CD8-positive, alpha-beta T cell (primary cell): ENCODE measurements at regions of chr3 and their contacts with region 1.

Region 1: DNA sequence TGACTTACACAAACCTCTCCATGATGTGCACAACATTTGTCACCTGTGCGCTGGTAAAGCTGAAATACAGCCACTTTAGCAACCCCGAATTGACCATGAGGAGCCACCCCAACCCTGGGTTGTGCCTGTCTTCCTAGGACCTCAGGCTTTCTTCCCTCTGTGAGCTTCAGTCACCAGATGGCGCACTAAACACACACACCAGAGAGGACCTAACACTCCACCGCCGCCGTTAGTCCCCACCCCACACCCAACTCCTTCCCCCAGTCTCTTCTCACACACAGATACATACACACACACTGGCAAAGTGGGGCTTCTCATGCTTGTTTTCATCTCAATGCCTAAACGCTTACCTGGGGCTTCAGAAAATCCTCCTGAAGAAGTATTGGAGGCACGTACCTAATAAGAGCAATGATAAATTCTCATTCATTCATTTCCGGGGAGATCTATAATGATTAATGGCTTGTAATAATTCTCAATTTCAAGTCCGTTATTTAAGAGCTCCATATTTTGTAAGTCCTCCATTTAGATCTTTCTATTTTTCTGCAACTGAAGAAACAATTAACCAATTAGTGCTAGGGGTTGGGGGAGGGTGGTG is 2.1 kb upstream of the CCDC80 start:
- DNase-seq: peak; percentile 58 to 89 (median 80)
- ATAC-seq: peak; percentile 97
- H3K4me3 ChIP-seq: no peak overlapping the region
- H3K4me3 Mint-ChIP-seq: peak overlapping the region; percentile 63
- H3K27ac ChIP-seq: no peak overlapping the region
- H3K27ac Mint-ChIP-seq: no peak overlapping the region
- H3K4me1 ChIP-seq: peaks cover 3% of the 10 kb centered on the region
- H3K4me1 Mint-ChIP-seq: peaks cover 16% of the 10 kb centered on the region
- H3K27me3 ChIP-seq: no peaks in the 10 kb centered on the region
- H3K27me3 Mint-ChIP-seq: peaks cover 6% of the 10 kb centered on the region
- CTCF ChIP-seq: peak; percentile 68

Region 2: DNA sequence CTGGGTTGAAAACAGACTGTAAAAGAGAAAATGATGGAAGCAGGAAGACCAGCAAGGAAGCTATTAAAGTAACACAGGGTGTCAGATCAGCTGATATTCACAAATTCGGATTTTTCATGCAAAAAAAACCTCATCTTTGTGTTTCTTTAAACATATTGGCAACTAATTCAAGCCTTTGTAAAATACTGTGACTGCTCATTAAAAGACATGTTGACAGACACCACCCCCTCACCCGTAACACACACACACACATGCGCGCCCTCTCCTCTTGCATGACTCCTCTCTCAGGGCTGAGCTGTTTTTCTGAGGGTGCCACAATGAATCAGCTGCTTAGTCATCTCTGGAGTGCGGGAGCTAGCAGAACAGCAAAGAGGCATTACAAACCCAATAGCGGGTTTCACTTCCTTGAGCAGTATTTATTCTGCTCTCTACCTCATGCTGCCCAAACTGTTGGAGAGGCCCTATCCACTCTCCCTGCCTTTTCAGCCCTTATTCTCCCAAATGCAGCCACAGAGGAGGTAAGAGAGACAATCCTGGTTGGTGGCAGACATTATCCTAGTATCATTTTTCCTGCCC is 33.7 kb after region 1 on chr3:
- CTCF ChIA-PET with region 1: no interaction called
- POLR2A ChIA-PET with region 1: no interaction called
- intact Hi-C with region 1: no loop called
- DNase-seq: peak; percentile 21 to 80 (median 69)
- ATAC-seq: peak; percentile 86
- H3K4me3 ChIP-seq: no peak overlapping the region
- H3K4me3 Mint-ChIP-seq: peak overlapping the region; percentile 27
- H3K27ac ChIP-seq: no peak overlapping the region
- H3K27ac Mint-ChIP-seq: peak overlapping the region; percentile 62
- H3K4me1 ChIP-seq: peaks cover 18% of the 10 kb centered on the region
- H3K4me1 Mint-ChIP-seq: peaks cover 41% of the 10 kb centered on the region
- H3K27me3 ChIP-seq: no peaks in the 10 kb centered on the region
- H3K27me3 Mint-ChIP-seq: peaks cover 3% of the 10 kb centered on the region
- CTCF ChIP-seq: no peak

Region 3: GRCh38 chr3:112699436-112699978 is 56.5 kb after region 1 on chr3:
- CTCF ChIA-PET with region 1: interaction called, 3 read pairs
- POLR2A ChIA-PET with region 1: no interaction called
- intact Hi-C with region 1: loop called in 1 of 2 experiments (anchors 5 kb)
- DNase-seq: peak in 1 of 9 experiments; percentile 17
- ATAC-seq: no peak
- H3K4me3 ChIP-seq: no peak overlapping the region
- H3K4me3 Mint-ChIP-seq: no peak overlapping the region
- H3K27ac ChIP-seq: no peak overlapping the region
- H3K27ac Mint-ChIP-seq: no peak overlapping the region
- H3K4me1 ChIP-seq: no peaks in the 10 kb centered on the region
- H3K4me1 Mint-ChIP-seq: no peaks in the 10 kb centered on the region
- H3K27me3 ChIP-seq: no peaks in the 10 kb centered on the region
- H3K27me3 Mint-ChIP-seq: peaks cover 2% of the 10 kb centered on the region
- CTCF ChIP-seq: no peak

Region 4: GRCh38 chr3:112814266-112814665 is 171.3 kb after region 1 on chr3:
- CTCF ChIA-PET with region 1: interaction called, 13 read pairs
- POLR2A ChIA-PET with region 1: no interaction called
- intact Hi-C with region 1: loop called in 1 of 2 experiments (anchors 1 kb)
- DNase-seq: peak in 2 of 9 experiments; percentile 20 to 34
- ATAC-seq: no peak
- H3K4me3 ChIP-seq: no peak overlapping the region
- H3K4me3 Mint-ChIP-seq: no peak overlapping the region
- H3K27ac ChIP-seq: no peak overlapping the region
- H3K27ac Mint-ChIP-seq: no peak overlapping the region
- H3K4me1 ChIP-seq: no peaks in the 10 kb centered on the region
- H3K4me1 Mint-ChIP-seq: peaks cover 12% of the 10 kb centered on the region
- H3K27me3 ChIP-seq: no peaks in the 10 kb centered on the region
- H3K27me3 Mint-ChIP-seq: no peaks in the 10 kb centered on the region
- CTCF ChIP-seq: no peak

Region 5: GRCh38 chr3:112894258-112894657 is 251.2 kb after region 1 on chr3:
- CTCF ChIA-PET with region 1: no interaction called
- POLR2A ChIA-PET with region 1: no interaction called
- intact Hi-C with region 1: no loop called
- DNase-seq: no peak
- ATAC-seq: no peak
- H3K4me3 ChIP-seq: no peak overlapping the region
- H3K4me3 Mint-ChIP-seq: no peak overlapping the region
- H3K27ac ChIP-seq: no peak overlapping the region
- H3K27ac Mint-ChIP-seq: no peak overlapping the region
- H3K4me1 ChIP-seq: no peaks in the 10 kb centered on the region
- H3K4me1 Mint-ChIP-seq: no peaks in the 10 kb centered on the region
- H3K27me3 ChIP-seq: no peaks in the 10 kb centered on the region
- H3K27me3 Mint-ChIP-seq: no peaks in the 10 kb centered on the region
- CTCF ChIP-seq: no peak

Region 6: GRCh38 chr3:112979240-112979832 is 336.3 kb after region 1 on chr3:
- CTCF ChIA-PET with region 1: interaction called, 54 read pairs
- POLR2A ChIA-PET with region 1: no interaction called
- intact Hi-C with region 1: loop called (anchors 1 kb)
- DNase-seq: peak in 3 of 9 experiments; percentile 37 to 72 (median 66)
- ATAC-seq: peak; percentile 37
- H3K4me3 ChIP-seq: no peak overlapping the region
- H3K4me3 Mint-ChIP-seq: no peak overlapping the region
- H3K27ac ChIP-seq: no peak overlapping the region
- H3K27ac Mint-ChIP-seq: no peak overlapping the region
- H3K4me1 ChIP-seq: peaks cover 38% of the 10 kb centered on the region
- H3K4me1 Mint-ChIP-seq: peaks cover 56% of the 10 kb centered on the region
- H3K27me3 ChIP-seq: no peaks in the 10 kb centered on the region
- H3K27me3 Mint-ChIP-seq: no peaks in the 10 kb centered on the region
- CTCF ChIP-seq: peak; percentile 93

Region 7: GRCh38 chr3:113035387-113035982 is 392.5 kb after region 1 on chr3:
- CTCF ChIA-PET with region 1: interaction called, 6 read pairs
- POLR2A ChIA-PET with region 1: no interaction called
- intact Hi-C with region 1: loop called (anchors 2 to 5 kb)
- DNase-seq: peak in 5 of 9 experiments; percentile 13 to 72 (median 39)
- ATAC-seq: peak; percentile 86
- H3K4me3 ChIP-seq: no peak overlapping the region
- H3K4me3 Mint-ChIP-seq: no peak overlapping the region
- H3K27ac ChIP-seq: no peak overlapping the region
- H3K27ac Mint-ChIP-seq: no peak overlapping the region
- H3K4me1 ChIP-seq: no peaks in the 10 kb centered on the region
- H3K4me1 Mint-ChIP-seq: no peaks in the 10 kb centered on the region
- H3K27me3 ChIP-seq: no peaks in the 10 kb centered on the region
- H3K27me3 Mint-ChIP-seq: no peaks in the 10 kb centered on the region
- CTCF ChIP-seq: peak; percentile 81

Region 8: DNA sequence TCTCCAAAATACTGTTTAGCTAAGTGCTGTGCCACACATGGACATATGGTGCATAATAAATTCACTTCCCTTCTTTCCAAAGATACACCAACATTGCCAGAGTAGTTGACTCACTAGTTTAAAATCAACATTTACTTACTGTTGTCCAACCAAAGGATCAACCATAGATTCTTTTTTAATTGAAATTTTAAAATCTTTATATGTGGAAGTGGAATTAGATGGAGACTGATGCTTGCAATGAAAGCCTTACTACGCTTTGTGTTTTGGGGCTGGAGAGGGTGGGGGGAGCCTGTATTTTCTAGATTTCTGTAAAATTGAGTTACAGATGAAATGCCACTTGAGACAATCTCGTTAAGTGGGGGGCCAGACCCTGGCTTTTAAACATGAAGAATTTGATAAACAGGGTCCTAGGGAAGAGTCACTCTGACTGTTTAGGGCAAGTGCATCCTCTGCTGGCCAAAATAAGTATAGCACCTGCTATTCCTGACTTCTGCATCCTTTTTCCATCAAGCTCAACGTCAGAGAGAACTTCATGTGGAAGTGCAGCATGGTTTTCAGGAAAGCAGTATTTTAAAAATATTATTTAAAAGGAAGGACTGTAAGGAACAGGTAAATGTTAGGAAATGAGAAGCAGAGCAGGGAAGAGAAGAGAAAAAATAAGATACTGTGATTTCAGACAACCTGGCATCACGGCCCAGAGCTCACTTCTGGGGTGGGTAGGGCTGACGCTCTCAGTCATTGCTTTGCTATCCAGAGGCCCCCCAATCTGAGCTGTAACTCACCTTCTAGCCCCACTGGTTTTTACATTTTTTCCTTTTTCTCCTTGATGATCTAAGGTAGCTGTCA is 645.0 kb after region 1 on chr3:
- CTCF ChIA-PET with region 1: interaction called, 72 read pairs
- POLR2A ChIA-PET with region 1: no interaction called
- intact Hi-C with region 1: loop called in 1 of 2 experiments (anchors 1 kb)
- DNase-seq: peak in 7 of 9 experiments; percentile 14 to 68 (median 56)
- ATAC-seq: peak; percentile 59
- H3K4me3 ChIP-seq: no peak overlapping the region
- H3K4me3 Mint-ChIP-seq: no peak overlapping the region
- H3K27ac ChIP-seq: no peak overlapping the region
- H3K27ac Mint-ChIP-seq: no peak overlapping the region
- H3K4me1 ChIP-seq: no peaks in the 10 kb centered on the region
- H3K4me1 Mint-ChIP-seq: no peaks in the 10 kb centered on the region
- H3K27me3 ChIP-seq: no peaks in the 10 kb centered on the region
- H3K27me3 Mint-ChIP-seq: no peaks in the 10 kb centered on the region
- CTCF ChIP-seq: peak; percentile 99

Region 9: DNA sequence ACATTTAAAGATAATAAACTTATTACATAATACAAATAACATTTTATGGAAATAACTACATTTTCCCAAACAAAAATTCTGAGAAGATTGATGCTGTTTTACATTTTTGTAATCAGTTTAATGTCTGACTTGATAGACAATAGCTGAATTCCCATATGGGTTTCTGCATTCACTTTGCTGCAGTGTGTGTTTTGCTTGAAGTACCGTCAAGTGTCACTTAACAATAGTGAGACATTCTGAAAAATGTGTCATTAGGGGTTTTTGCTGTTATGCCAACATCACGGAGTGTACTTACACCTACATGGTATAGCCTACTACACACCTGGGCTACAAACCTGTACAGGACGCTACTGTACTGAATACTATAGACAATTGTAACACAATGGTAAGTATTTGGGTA is 995.9 kb after region 1 on chr3:
- CTCF ChIA-PET with region 1: no interaction called
- POLR2A ChIA-PET with region 1: no interaction called
- intact Hi-C with region 1: no loop called
- DNase-seq: no peak
- ATAC-seq: no peak
- H3K4me3 ChIP-seq: no peak overlapping the region
- H3K4me3 Mint-ChIP-seq: no peak overlapping the region
- H3K27ac ChIP-seq: no peak overlapping the region
- H3K27ac Mint-ChIP-seq: no peak overlapping the region
- H3K4me1 ChIP-seq: no peaks in the 10 kb centered on the region
- H3K4me1 Mint-ChIP-seq: no peaks in the 10 kb centered on the region
- H3K27me3 ChIP-seq: no peaks in the 10 kb centered on the region
- H3K27me3 Mint-ChIP-seq: no peaks in the 10 kb centered on the region
- CTCF ChIP-seq: no peak